CD4-positive, alpha-beta T cell (primary cell): ENCODE measurements at regions of chr15 and their contacts with region 1.

Region 1: GRCh38 chr15:40108855-40109735 is at the start of gene BMF:
- DNase-seq: peak; percentile 93 to 99 (median 97)
- ATAC-seq: peak; percentile 80
- H3K4me3 ChIP-seq: peak within 1 kb of the TSS; percentile 88
- H3K4me3 Mint-ChIP-seq: peak within 1 kb of the TSS; percentile 89
- H3K27ac ChIP-seq: peak within 1 kb of the TSS in 1 of 2 donors; percentile 27
- H3K27ac Mint-ChIP-seq: peak within 1 kb of the TSS; percentile 58
- H3K4me1 ChIP-seq: peaks cover 51% of the 10 kb centered on the region
- H3K4me1 Mint-ChIP-seq: peaks cover 55% of the 10 kb centered on the region
- H3K27me3 ChIP-seq: no peaks in the 10 kb centered on the region
- H3K27me3 Mint-ChIP-seq: no peaks in the 10 kb centered on the region
- CTCF ChIP-seq: peak; percentile 38
- total RNA-seq, gene BMF: 13.5 to 13.9 TPM

Region 2: DNA sequence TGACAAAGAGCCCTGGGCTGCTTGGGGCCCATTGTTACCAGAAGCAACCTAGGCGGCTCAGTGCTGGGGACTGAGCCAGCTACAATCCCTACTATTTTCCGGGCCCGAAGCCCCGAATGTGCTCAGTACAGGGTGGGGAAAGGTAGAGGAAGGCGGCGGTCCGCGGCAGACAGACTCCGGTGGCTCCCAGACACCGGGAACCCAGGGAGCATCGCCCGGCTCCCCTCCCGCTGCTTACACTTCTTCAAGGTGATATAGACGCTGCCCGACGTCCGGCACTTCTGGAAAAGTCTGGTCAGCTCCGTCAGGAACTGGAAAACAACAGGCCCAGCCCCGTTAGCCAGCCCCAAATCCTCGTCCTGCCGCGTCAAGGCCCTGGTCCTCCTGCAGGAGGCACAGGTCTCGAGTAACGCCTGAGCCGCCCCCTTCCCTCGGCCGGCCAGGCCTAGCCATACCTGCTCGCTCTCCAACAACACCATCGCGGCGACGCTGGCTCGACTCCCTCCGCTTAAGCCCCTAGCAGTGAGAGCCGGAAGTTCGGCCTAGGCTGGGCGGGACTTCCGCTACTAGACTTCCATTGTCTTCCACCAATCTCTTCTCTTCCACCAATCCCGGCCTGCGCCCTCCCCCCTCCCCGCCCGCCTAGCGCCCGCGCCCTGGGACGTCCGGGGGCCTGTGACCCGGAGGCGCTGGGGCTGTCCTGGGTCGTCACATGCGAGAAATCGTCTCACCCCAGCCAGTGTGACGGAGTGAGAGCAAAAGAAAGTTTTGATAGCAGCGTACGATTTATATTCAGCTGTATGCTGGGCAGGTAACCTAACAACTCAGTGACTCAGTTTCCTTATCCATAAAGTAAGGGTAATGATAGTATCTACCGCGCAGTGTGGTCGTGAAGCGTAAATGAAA is 70.2 kb before region 1 on chr15 and contains the start of gene SRP14:
- CTCF ChIA-PET with region 1: interaction called, 67 read pairs
- POLR2A ChIA-PET with region 1: interaction called, 15 read pairs
- intact Hi-C with region 1: loop called in 1 of 2 experiments (anchors 2 kb)
- DNase-seq: peak; percentile 85 to 96 (median 90)
- ATAC-seq: peak; percentile 92
- H3K4me3 ChIP-seq: peak within 1 kb of the TSS; percentile 95
- H3K4me3 Mint-ChIP-seq: peak within 1 kb of the TSS; percentile 100
- H3K27ac ChIP-seq: peak within 1 kb of the TSS; percentile 88 to 90
- H3K27ac Mint-ChIP-seq: peak within 1 kb of the TSS; percentile 97
- H3K4me1 ChIP-seq: peaks cover 20% of the 10 kb centered on the region
- H3K4me1 Mint-ChIP-seq: peaks cover 49% of the 10 kb centered on the region
- H3K27me3 ChIP-seq: no peaks in the 10 kb centered on the region
- H3K27me3 Mint-ChIP-seq: no peaks in the 10 kb centered on the region
- CTCF ChIP-seq: no peak
- total RNA-seq, gene SRP14: 120 to 126 TPM

Region 3: DNA sequence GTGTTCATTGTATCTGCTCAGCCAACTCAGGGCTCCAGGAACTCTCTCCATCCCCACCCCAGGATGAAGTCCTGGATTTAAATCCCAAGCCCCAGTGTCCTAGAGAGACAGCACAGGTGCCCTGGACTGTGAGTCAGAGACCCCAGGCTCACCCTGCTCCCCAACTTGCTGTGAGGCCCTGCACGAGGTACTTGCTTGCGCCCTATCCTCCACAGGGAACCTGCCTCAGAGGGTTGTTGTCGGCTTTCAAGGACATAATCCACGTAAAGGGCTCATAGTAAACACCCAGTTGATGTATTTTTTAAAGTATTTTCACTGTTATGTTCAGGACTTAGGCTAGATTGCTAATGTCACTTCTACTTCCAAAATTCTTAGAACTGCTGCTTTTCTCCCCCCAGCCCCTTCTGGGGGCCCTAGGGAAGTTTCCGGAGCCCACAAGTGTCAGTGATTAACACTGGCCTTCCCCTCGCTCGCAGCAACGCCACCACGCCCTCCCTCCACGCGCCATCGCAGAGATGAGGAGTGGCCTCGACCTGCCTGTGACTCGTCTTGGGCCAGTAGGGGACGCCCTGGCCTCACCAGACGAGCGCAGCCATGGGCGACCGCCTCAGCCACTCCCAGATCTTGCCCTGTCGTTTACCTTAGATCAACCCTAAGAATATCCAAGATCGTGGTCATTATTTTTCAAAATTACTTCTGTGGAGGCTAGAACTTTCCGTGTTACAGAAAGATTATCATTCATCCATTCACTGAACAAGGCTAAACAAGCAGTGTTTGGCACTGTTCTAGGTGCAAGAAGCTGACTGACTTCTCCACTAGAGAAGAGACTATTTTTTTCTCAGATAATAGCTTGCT is 64.2 kb before region 1 on chr15:
- CTCF ChIA-PET with region 1: interaction called, 67 read pairs
- POLR2A ChIA-PET with region 1: interaction called, 53 read pairs
- intact Hi-C with region 1: loop called in 1 of 2 experiments (anchors 2 kb)
- DNase-seq: peak; percentile 66 to 91 (median 78)
- ATAC-seq: peak; percentile 82
- H3K4me3 ChIP-seq: no peak overlapping the region
- H3K4me3 Mint-ChIP-seq: peak overlapping the region; percentile 39
- H3K27ac ChIP-seq: no peak overlapping the region
- H3K27ac Mint-ChIP-seq: peak overlapping the region; percentile 70
- H3K4me1 ChIP-seq: peaks cover 56% of the 10 kb centered on the region
- H3K4me1 Mint-ChIP-seq: peaks cover 68% of the 10 kb centered on the region
- H3K27me3 ChIP-seq: no peaks in the 10 kb centered on the region
- H3K27me3 Mint-ChIP-seq: no peaks in the 10 kb centered on the region
- CTCF ChIP-seq: peak; percentile 95

Region 4: GRCh38 chr15:40098489-40099261 is 10.4 kb before region 1 on chr15:
- CTCF ChIA-PET with region 1: interaction called, 9 read pairs
- POLR2A ChIA-PET with region 1: interaction called, 23 read pairs
- intact Hi-C with region 1: no loop called
- DNase-seq: peak in 13 of 14 experiments; percentile 30 to 80 (median 58)
- ATAC-seq: peak; percentile 97
- H3K4me3 ChIP-seq: no peak overlapping the region
- H3K4me3 Mint-ChIP-seq: peak overlapping the region; percentile 60
- H3K27ac ChIP-seq: peak overlapping the region; percentile 51 to 59
- H3K27ac Mint-ChIP-seq: peak overlapping the region; percentile 90
- H3K4me1 ChIP-seq: peaks cover 48% of the 10 kb centered on the region
- H3K4me1 Mint-ChIP-seq: peaks cover 54% of the 10 kb centered on the region
- H3K27me3 ChIP-seq: no peaks in the 10 kb centered on the region
- H3K27me3 Mint-ChIP-seq: no peaks in the 10 kb centered on the region
- CTCF ChIP-seq: no peak

Region 5: DNA sequence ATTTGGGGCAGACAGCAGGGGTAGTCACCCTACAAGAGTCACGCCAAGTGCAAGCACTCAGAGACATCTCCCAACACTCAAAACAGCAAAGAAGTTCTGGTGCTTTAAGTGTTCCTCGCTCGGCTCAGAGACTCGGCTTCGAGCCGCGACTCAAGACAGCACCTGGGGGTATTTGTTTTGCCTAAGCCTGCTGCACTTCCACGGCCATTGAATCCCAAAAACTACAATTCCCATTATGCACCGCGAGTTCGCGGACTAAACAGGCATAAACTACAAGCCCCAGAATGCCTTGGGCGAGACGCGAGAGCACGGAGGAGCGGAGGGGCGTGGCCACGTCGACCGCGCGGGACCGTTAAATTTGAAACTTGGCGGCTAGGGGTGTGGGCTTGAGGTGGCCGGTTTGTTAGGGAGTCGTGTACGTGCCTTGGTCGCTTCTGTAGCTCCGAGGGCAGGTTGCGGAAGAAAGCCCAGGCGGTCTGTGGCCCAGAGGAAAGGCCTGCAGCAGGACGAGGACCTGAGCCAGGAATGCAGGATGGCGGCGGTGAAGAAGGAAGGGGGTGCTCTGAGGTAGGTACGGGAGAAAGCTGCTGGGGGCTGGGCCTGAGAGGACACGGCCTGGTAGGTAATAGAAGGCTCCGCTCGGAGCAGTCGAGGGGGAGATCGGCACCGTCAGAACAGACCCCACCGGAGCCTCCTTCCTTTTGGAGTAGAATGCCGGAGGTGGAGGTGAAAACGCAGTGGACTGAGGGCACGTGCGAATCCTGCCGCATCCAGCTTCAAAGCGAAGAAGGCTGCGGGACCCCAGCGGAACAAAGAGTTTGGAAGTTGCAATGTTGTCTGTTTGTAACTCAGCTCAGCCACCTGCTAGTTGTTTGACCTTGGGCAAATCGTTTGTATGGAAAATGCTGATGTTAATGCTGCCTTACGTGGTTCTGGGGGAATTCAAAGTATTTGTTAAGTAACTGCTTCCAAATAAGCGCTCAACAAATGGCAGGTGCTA is 51.9 kb after region 1 on chr15 and contains the start of gene BUB1B:
- CTCF ChIA-PET with region 1: interaction called, 11 read pairs
- POLR2A ChIA-PET with region 1: interaction called, 4 read pairs
- intact Hi-C with region 1: loop called in 1 of 2 experiments (anchors 2 kb)
- DNase-seq: peak; percentile 84 to 96 (median 90)
- ATAC-seq: peak; percentile 99
- H3K4me3 ChIP-seq: peak within 1 kb of the TSS; percentile 78
- H3K4me3 Mint-ChIP-seq: no peak within 1 kb of the TSS
- H3K27ac ChIP-seq: no peak within 1 kb of the TSS
- H3K27ac Mint-ChIP-seq: no peak within 1 kb of the TSS
- H3K4me1 ChIP-seq: peaks cover 12% of the 10 kb centered on the region
- H3K4me1 Mint-ChIP-seq: no peaks in the 10 kb centered on the region
- H3K27me3 ChIP-seq: no peaks in the 10 kb centered on the region
- H3K27me3 Mint-ChIP-seq: no peaks in the 10 kb centered on the region
- CTCF ChIP-seq: no peak
- total RNA-seq, gene BUB1B: 1.4 to 2.4 TPM

Region 6: GRCh38 chr15:40301467-40302179 is 192.5 kb after region 1 on chr15:
- CTCF ChIA-PET with region 1: no interaction called
- POLR2A ChIA-PET with region 1: no interaction called
- intact Hi-C with region 1: no loop called
- DNase-seq: no peak
- ATAC-seq: no peak
- H3K4me3 ChIP-seq: no peak overlapping the region
- H3K4me3 Mint-ChIP-seq: no peak overlapping the region
- H3K27ac ChIP-seq: no peak overlapping the region
- H3K27ac Mint-ChIP-seq: no peak overlapping the region
- H3K4me1 ChIP-seq: peaks cover 26% of the 10 kb centered on the region
- H3K4me1 Mint-ChIP-seq: peaks cover 28% of the 10 kb centered on the region
- H3K27me3 ChIP-seq: no peaks in the 10 kb centered on the region
- H3K27me3 Mint-ChIP-seq: no peaks in the 10 kb centered on the region
- CTCF ChIP-seq: no peak

Region 7: DNA sequence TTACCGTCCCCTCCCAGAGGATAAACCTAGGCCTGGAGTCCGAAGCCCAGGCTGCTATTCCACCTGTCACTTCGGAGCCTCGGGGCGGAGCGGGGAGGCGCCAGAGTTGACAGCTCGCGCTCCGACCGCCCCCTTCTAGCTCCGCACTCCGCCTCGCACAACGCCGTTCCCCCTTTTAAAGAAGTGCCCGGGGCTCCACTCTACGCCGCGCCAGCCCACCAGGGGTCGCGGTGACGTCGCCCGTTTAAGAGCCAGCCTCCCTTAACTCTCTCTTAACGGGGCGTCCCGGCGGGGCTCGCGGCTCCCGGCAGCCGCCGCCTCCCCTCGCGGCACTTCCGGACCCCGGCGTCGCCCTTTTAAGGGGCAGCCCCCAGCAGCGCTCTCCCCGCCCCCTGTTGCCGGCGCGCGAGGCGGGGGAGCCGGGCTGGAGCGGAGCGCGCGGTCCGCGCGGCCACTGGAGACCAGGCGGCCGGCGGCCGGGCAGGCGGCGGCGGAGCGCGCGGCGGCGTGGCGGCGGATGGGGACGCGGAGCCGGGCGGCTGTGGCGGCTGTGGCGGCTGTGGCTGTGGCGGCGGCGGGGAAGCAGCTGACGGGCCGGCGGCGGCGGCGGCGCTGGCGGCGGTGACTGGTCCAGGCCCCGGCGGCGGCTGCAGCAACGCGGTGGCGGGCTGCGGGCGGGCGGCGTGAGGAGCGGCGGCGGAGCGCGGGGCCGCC is 214.3 kb after region 1 on chr15 and contains the start of gene INAFM2:
- CTCF ChIA-PET with region 1: no interaction called
- POLR2A ChIA-PET with region 1: no interaction called
- intact Hi-C with region 1: loop called in 1 of 2 experiments (anchors 2 kb)
- DNase-seq: peak; percentile 75 to 96 (median 87)
- ATAC-seq: peak; percentile 84
- H3K4me3 ChIP-seq: peak within 1 kb of the TSS; percentile 55
- H3K4me3 Mint-ChIP-seq: peak within 1 kb of the TSS; percentile 92
- H3K27ac ChIP-seq: peak within 1 kb of the TSS; percentile 10 to 41
- H3K27ac Mint-ChIP-seq: peak within 1 kb of the TSS; percentile 79
- H3K4me1 ChIP-seq: peaks cover 32% of the 10 kb centered on the region
- H3K4me1 Mint-ChIP-seq: peaks cover 36% of the 10 kb centered on the region
- H3K27me3 ChIP-seq: no peaks in the 10 kb centered on the region
- H3K27me3 Mint-ChIP-seq: no peaks in the 10 kb centered on the region
- CTCF ChIP-seq: peak; percentile 59
- total RNA-seq, gene INAFM2: 6.8 to 7.0 TPM